T-cell (primary cell): ENCODE measurements at regions of chr11 and their contacts with region 1.

Region 1: DNA sequence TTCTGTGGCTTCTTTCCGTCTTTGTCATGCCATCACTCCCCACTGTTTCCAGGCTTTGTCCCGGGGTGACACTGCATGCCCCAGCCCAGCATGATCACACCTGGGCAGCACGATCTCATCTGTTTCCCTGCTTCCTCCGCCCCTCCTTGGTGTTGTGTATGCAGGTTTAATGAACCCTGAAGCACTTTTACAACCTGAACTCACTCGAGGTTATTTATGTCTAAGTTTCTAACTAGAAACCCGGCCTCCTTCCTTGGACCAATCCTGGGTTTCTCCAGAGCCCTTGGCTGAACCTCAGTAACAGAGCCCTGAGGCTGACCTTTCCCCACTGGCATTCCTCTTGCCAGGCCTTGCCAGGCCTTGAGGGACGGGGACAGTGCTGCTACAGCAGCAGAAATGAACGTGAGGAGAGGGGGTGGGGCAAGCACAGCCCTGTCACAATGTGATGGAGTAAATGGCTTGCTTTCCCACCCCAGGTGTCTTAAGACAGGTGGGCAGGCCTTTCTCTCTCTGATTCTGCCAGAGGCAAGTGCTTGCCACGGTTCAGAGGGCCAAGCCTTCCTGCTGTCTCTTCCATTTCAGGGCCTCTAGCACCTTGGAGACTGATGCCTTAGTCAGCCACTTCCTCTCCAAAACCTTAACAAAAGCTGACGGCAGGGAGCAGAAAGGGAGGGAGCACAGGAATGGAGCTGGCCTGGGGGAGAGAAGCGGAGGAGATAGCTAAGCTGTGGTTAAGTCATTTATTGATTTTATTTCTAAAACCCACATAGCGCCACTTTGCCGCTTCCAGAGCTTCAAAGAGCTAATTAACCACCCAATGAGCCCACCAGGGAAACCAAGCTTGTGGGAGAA is 3.1 kb upstream of the PYGM start:
- DNase-seq: peak in 5 of 35 experiments; percentile 26 to 55 (median 28)
- ATAC-seq: peak in 3 of 4 experiments; percentile 4 to 14 (median 10)
- H3K4me3 ChIP-seq: peak overlapping the region in 1 of 2 donors; percentile 30
- H3K4me3 Mint-ChIP-seq: peak overlapping the region; percentile 25 to 86 (median 70)
- H3K27ac ChIP-seq: peak overlapping the region; percentile 74
- H3K27ac Mint-ChIP-seq: peak overlapping the region; percentile 88 to 97
- H3K4me1 ChIP-seq: peaks cover 65 to 100% of the 10 kb centered on the region in 2 experiments
- H3K4me1 Mint-ChIP-seq: peaks cover 83 to 87% (median 86%) of the 10 kb centered on the region in 3 donors
- H3K27me3 ChIP-seq: no peaks in the 10 kb centered on the region
- H3K27me3 Mint-ChIP-seq: no peaks in the 10 kb centered on the region

Region 2: DNA sequence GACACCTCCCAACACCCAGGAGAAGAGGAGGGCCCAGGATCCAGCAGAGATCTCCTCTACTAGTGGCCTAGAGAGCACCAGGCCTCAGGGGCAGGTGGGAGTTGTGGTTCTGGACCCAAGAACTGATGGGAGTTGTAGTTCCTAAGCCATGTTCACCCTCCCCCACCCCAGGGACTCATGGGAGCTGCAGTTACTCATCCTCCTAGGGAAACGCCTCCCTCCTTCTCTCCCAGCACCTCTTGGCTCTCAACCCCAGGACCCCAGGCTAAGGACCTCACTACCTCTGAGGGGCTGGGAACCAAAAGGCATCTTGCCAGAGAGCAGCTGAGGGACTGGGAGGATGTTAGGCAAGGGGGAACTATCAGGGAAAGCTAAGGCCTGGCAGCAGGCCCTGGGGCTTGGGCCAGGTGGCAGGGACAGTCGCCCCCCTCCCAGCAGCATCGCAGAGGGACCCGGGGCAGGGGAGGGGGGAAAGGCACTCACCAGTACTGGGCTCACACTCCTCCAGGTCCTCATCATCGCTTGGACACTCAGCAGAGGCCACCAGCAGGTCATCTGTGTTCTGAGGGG is 143.0 kb before region 1 on chr11:
- CTCF ChIA-PET with region 1: no interaction called
- POLR2A ChIA-PET with region 1: no interaction called
- DNase-seq: no peak
- ATAC-seq: no peak
- H3K4me3 ChIP-seq: no peak overlapping the region
- H3K4me3 Mint-ChIP-seq: no peak overlapping the region
- H3K27ac ChIP-seq: no peak overlapping the region
- H3K27ac Mint-ChIP-seq: no peak overlapping the region
- H3K4me1 ChIP-seq: peaks cover 11% of the 10 kb centered on the region in 2 experiments
- H3K4me1 Mint-ChIP-seq: peaks cover 3 to 15% (median 11%) of the 10 kb centered on the region in 3 donors
- H3K27me3 ChIP-seq: peaks cover 0 to 4% of the 10 kb centered on the region in 2 experiments
- H3K27me3 Mint-ChIP-seq: peaks cover 0 to 3% of the 10 kb centered on the region in 2 donors

Region 3: GRCh38 chr11:64742889-64743590 is 19.9 kb before region 1 on chr11:
- CTCF ChIA-PET with region 1: interaction called, 3 to 5 read pairs
- POLR2A ChIA-PET with region 1: interaction called, 3 to 12 read pairs
- DNase-seq: peak; percentile 34 to 84 (median 66)
- ATAC-seq: peak; percentile 9 to 14 (median 12)
- H3K4me3 ChIP-seq: peak overlapping the region; percentile 93 to 97
- H3K4me3 Mint-ChIP-seq: peak overlapping the region; percentile 95 to 97 (median 96)
- H3K27ac ChIP-seq: peak overlapping the region; percentile 92
- H3K27ac Mint-ChIP-seq: no peak overlapping the region
- H3K4me1 ChIP-seq: peaks cover 8 to 63% of the 10 kb centered on the region in 2 experiments
- H3K4me1 Mint-ChIP-seq: peaks cover 42 to 45% (median 44%) of the 10 kb centered on the region in 3 donors
- H3K27me3 ChIP-seq: no peaks in the 10 kb centered on the region
- H3K27me3 Mint-ChIP-seq: no peaks in the 10 kb centered on the region